Activated T-helper 1 cell treated with anti-CD3 and anti-CD28 coated beads, Interleukin-12 subunit alpha, Interleukin-12 subunit beta, Interleukin-2, Interleukin-4 antibody, amounts not matched to agents 30 ng/mL and 10 ng/mL and 1 ng/mL, durations not matched to agents 14 hours and 24 hours and 36 hours (primary cell): ENCODE measurements at regions of chr17 and their contacts with region 1.

Region 1: DNA sequence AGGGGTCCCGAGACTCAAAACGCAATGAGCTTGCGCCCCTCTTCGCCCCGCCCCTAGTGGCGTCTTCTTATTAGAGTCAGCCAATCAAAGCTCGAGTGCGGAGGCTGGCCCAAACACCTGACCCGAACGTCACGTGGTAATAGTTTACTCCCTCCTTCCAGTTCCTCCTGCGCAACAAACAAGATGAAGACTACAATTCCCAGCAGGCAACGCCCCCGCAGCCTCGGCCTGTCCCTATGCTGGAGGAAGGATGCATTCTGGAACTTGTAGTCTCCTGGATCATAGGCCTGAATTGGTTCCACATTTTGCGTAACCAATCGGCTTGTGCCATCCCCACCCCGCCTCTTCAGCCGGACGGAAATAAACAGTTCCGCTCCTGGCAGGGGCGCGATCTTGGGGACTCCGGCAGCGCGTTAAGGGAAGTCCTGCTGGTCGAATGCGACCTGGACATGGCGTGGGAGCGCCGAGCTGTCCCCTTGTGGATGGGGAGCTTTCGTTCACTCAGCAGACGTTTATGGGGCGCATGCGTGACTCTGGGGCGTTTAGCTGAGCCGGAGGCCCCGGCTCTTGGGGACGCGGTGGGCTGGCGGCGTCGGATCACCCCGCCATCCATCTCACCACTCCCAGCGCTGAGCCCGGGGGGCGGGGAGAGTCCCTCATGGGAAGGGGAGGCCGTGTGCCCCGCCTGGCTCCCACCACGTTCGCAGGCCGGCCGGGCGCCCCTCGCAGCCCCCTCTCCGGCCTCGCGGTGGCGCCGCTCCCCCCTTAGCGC is at the start of gene WBP2:
- DNase-seq: peak; percentile 96
- H3K4me3 Mint-ChIP-seq: no peak within 1 kb of the TSS
- H3K27ac Mint-ChIP-seq: peak within 1 kb of the TSS; percentile 88
- H3K4me1 Mint-ChIP-seq: peaks cover 34% of the 10 kb centered on the region
- H3K27me3 Mint-ChIP-seq: no peaks in the 10 kb centered on the region
- total RNA-seq, gene WBP2: 68.8 and 74.4 TPM in 2 replicates

Region 2: GRCh38 chr17:75667021-75667790 is 188.3 kb before region 1 on chr17 and contains the starts of genes RECQL5 and SAP30BP:
- intact Hi-C with region 1: loop called (anchors 2 kb)
- DNase-seq: peak; percentile 98
- H3K4me3 Mint-ChIP-seq: peak within 1 kb of the TSS; percentile 79
- H3K27ac Mint-ChIP-seq: peak within 1 kb of the TSS; percentile 71
- H3K4me1 Mint-ChIP-seq: peaks cover 11% of the 10 kb centered on the region
- H3K27me3 Mint-ChIP-seq: no peaks in the 10 kb centered on the region
- total RNA-seq, gene RECQL5: 29.9 and 34.1 TPM in 2 replicates
- total RNA-seq, gene SAP30BP: 113 and 117 TPM in 2 replicates

Region 3: GRCh38 chr17:75784473-75785015 is 71.0 kb before region 1 on chr17 and contains the start of gene UNK:
- intact Hi-C with region 1: loop called (anchors 1 kb)
- DNase-seq: peak; percentile 94
- H3K4me3 Mint-ChIP-seq: peak within 1 kb of the TSS; percentile 92
- H3K27ac Mint-ChIP-seq: peak within 1 kb of the TSS; percentile 99
- H3K4me1 Mint-ChIP-seq: peaks cover 47% of the 10 kb centered on the region
- H3K27me3 Mint-ChIP-seq: peaks cover 2% of the 10 kb centered on the region
- total RNA-seq, gene UNK: 26.0 and 26.9 TPM in 2 replicates

Region 4: GRCh38 chr17:75808905-75809715 is 46.4 kb before region 1 on chr17:
- intact Hi-C with region 1: no loop called
- DNase-seq: no peak
- H3K4me3 Mint-ChIP-seq: no peak overlapping the region
- H3K27ac Mint-ChIP-seq: peak overlapping the region; percentile 59
- H3K4me1 Mint-ChIP-seq: peaks cover 1% of the 10 kb centered on the region
- H3K27me3 Mint-ChIP-seq: no peaks in the 10 kb centered on the region

Region 5: GRCh38 chr17:75834944-75835670 is 20.4 kb before region 1 on chr17:
- intact Hi-C with region 1: no loop called
- DNase-seq: no peak
- H3K4me3 Mint-ChIP-seq: no peak overlapping the region
- H3K27ac Mint-ChIP-seq: no peak overlapping the region
- H3K4me1 Mint-ChIP-seq: peaks cover 22% of the 10 kb centered on the region
- H3K27me3 Mint-ChIP-seq: no peaks in the 10 kb centered on the region

Region 6: DNA sequence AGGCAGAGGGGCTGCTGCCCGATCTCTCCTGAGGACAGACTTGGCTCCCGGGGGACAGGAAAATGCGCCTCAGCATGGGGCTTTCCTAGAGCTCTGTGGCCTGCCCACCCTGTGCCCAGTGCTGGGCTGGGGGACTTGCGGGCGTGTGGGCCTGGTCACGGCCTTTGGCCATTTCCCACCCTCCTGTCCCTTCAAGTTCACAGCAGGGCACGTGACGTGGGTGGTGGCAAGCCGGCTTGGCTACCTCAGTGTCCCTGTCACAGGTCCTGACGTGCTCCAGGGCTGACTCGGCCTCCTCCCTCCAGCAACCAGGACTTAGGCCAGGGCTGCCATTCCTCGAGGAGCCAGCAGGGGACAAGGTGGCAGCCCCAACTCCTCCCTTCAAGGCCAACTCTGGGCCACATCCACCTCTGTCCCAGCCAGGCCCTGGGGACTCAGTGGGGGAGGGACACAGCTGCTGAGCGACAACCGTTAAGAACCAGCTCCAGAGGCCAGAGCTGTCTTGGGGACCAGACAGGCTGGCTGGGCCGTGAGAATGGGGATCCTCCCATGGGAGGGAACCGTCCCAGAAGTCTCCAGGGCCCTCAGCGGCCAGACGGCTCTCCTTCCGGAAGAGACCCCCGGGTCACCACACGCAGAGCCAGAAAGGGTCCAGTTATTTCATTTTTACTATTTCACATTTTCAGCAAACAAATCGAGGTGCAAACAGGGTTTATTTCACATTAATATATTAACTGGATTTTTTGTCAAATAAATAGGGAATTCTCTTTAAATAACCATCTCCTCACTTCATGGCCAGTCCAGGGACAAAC is 10.2 kb before region 1 on chr17:
- intact Hi-C with region 1: loop called (anchors 1 kb)
- DNase-seq: no peak
- H3K4me3 Mint-ChIP-seq: peak overlapping the region; percentile 66
- H3K27ac Mint-ChIP-seq: peak overlapping the region; percentile 48
- H3K4me1 Mint-ChIP-seq: peaks cover 16% of the 10 kb centered on the region
- H3K27me3 Mint-ChIP-seq: no peaks in the 10 kb centered on the region

Region 7: DNA sequence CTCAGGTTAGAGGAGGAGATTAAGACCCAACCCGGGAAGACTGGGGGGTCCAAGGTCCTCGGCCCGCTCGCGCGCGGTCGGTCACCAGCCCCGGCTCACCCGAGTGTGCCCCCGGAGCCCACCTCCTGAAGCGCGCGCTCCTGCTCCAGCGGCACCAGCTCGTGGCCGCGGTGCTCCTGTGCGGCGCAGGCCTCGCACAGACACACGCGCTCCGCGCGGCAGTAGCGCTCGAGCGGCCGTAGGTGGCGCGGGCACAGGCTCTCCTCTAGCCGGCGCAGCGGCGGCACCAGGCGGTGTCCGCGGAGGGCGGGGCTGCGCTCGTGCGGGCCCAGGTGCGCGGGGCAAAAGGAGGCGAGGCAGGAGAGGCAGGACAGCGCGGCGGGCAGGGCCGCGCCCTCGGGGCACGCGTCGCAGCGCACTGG is 22.3 kb after region 1 on chr17:
- intact Hi-C with region 1: loop called (anchors 1 kb)
- DNase-seq: peak; percentile 71
- H3K4me3 Mint-ChIP-seq: peak overlapping the region; percentile 93
- H3K27ac Mint-ChIP-seq: peak overlapping the region; percentile 95
- H3K4me1 Mint-ChIP-seq: peaks cover 32% of the 10 kb centered on the region
- H3K27me3 Mint-ChIP-seq: peaks cover 16% of the 10 kb centered on the region

Region 8: GRCh38 chr17:75904749-75905521 is 49.4 kb after region 1 on chr17 and contains the start of gene MRPL38:
- intact Hi-C with region 1: loop called (anchors 1 kb)
- DNase-seq: peak; percentile 96
- H3K4me3 Mint-ChIP-seq: peak within 1 kb of the TSS; percentile 99
- H3K27ac Mint-ChIP-seq: peak within 1 kb of the TSS; percentile 84
- H3K4me1 Mint-ChIP-seq: peaks cover 12% of the 10 kb centered on the region
- H3K27me3 Mint-ChIP-seq: no peaks in the 10 kb centered on the region
- total RNA-seq, gene MRPL38: 151 and 160 TPM in 2 replicates

Region 9: DNA sequence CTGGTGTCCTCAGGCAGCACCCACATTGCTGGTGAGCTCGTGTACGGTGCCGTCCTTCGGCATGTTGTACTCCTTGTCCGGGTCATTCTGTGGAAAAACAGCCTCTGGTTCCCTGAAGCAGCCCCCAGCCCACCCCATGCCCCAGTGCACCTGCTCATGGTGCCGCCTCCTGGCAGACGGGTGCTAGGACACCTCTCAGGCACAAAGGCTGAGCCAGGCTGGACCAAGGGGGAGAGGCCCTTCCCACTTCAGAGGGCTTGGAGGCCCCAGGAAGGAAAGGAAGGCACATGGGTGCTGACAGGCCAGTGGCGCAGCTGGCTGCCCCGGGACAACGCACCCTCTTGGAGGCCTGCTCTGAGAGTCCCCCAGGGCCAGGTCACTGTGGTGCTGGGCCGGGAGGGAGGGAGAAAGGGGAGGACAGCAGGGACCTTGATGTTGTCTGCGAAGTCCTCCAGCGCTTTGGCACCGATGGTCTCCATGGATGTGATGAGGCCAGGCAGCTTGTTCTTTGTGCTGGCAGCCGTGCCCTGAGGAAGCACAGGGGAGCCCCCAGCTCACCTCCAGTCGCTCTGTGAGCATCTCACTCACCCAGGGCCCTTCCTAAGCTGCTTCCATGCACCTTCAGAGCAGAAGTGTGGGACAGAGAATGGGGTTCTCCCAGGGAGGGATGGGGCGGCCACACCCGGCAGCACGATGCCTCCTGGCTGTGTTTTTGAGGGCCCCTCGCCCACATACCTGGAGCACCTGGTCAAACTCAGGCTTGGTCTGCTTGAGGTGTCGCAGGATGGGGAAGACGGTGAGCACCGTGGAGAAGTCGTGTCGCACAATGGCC is 232.8 kb after region 1 on chr17:
- intact Hi-C with region 1: no loop called
- DNase-seq: no peak
- H3K4me3 Mint-ChIP-seq: no peak overlapping the region
- H3K27ac Mint-ChIP-seq: no peak overlapping the region
- H3K4me1 Mint-ChIP-seq: no peaks in the 10 kb centered on the region
- H3K27me3 Mint-ChIP-seq: no peaks in the 10 kb centered on the region

Region 10: GRCh38 chr17:76327696-76328095 is 472.2 kb after region 1 on chr17:
- intact Hi-C with region 1: no loop called
- DNase-seq: no peak
- H3K4me3 Mint-ChIP-seq: no peak overlapping the region
- H3K27ac Mint-ChIP-seq: no peak overlapping the region
- H3K4me1 Mint-ChIP-seq: no peaks in the 10 kb centered on the region
- H3K27me3 Mint-ChIP-seq: no peaks in the 10 kb centered on the region